ENCODE measurements at regions of chr10 and their contacts with region 1.

Region 1: DNA sequence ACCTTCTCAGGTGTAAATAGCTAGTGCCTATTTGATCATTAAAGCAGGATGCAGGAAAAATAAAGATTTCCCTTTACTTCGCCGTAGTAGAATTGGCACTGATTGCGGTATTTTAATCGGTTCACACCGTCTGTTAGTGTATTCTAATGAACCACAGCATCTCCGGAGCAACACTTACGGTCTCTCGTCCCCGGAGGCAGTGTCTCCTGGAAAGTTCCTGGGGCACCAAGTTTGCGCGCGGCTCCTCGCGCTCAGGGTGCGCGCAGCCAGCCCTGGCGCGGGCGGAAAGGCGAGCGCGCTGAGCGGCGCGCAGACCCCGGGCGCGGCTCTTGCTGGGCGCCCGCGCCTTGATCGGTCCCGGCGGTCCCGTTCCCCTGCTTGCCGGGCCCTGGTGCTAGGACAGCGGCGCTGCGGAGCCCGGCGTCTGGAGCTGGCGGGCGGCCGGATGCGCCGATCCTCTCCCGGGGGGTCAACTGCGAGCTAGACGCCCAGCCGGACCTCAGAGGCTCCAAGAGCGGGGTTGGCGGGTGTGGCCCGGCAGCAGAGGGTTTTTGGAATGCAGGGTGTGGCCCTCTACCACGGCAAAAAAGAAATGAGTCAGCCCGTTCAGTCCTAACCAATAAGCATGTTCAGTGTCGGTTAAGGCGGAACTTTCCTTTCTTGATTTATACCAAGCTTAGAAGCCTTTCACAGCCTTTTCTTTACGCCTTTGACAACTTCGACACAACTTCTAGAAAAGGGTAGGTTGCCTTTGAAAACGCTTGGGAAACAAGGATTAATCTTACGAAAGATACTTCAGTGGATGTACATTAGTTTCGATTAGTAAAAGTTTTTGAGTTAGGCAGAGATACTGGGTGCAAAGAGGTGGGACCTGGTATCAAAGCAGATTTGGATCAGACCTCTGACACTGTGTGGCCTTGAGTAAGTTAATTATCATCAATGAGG is 166.8 kb upstream of the ASAH2 start:
- DNase-seq: peak; percentile 81 to 86
- ATAC-seq: peak; percentile 83 to 92 (median 88)
- H3K4me3 ChIP-seq: peak overlapping the region; percentile 83
- H3K27ac ChIP-seq: peak overlapping the region; percentile 79
- H3K4me1 ChIP-seq: peaks cover 29% of the 10 kb centered on the region
- H3K27me3 ChIP-seq: no peaks in the 10 kb centered on the region
- CTCF ChIP-seq: peak; percentile 14

Region 2: GRCh38 chr10:50310560-50311174 is 107.5 kb before region 1 on chr10:
- intact Hi-C with region 1: loop called in 1 of 2 experiments (anchors 2 kb)
- DNase-seq: no peak
- ATAC-seq: peak in 1 of 4 donors; percentile 59
- H3K4me3 ChIP-seq: no peak overlapping the region
- H3K27ac ChIP-seq: no peak overlapping the region
- H3K4me1 ChIP-seq: no peaks in the 10 kb centered on the region
- H3K27me3 ChIP-seq: no peaks in the 10 kb centered on the region
- CTCF ChIP-seq: no peak

Region 3: GRCh38 chr10:50336140-50336539 is 82.0 kb before region 1 on chr10:
- intact Hi-C with region 1: loop called in 1 of 2 experiments (anchors 5 kb)
- DNase-seq: no peak
- ATAC-seq: no peak
- H3K4me3 ChIP-seq: no peak overlapping the region
- H3K27ac ChIP-seq: no peak overlapping the region
- H3K4me1 ChIP-seq: no peaks in the 10 kb centered on the region
- H3K27me3 ChIP-seq: no peaks in the 10 kb centered on the region
- CTCF ChIP-seq: no peak

Region 4: DNA sequence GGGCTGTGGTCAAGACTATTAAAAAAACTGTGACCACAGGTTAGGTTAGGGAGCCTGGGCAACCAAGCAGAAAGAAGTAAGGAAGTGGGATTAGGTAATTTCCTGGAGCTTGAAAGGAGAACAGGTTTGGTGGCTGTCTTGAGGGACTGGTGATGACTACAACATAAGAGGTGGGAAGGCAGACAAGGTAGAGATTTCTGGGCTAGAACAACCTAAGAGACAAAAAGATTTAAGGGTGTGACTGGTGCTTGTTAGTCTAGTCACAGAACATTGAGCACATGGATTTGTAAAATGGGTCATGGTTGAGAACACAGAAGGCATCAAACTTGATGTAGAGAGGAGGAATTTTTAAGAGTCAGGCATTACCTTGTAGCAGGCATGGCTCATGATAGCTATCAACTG is 43.1 kb before region 1 on chr10:
- intact Hi-C with region 1: loop called in 1 of 2 experiments (anchors 2 kb)
- DNase-seq: no peak
- ATAC-seq: no peak
- H3K4me3 ChIP-seq: no peak overlapping the region
- H3K27ac ChIP-seq: peak overlapping the region; percentile 75
- H3K4me1 ChIP-seq: peaks cover 39% of the 10 kb centered on the region
- H3K27me3 ChIP-seq: no peaks in the 10 kb centered on the region
- CTCF ChIP-seq: no peak

Region 5: DNA sequence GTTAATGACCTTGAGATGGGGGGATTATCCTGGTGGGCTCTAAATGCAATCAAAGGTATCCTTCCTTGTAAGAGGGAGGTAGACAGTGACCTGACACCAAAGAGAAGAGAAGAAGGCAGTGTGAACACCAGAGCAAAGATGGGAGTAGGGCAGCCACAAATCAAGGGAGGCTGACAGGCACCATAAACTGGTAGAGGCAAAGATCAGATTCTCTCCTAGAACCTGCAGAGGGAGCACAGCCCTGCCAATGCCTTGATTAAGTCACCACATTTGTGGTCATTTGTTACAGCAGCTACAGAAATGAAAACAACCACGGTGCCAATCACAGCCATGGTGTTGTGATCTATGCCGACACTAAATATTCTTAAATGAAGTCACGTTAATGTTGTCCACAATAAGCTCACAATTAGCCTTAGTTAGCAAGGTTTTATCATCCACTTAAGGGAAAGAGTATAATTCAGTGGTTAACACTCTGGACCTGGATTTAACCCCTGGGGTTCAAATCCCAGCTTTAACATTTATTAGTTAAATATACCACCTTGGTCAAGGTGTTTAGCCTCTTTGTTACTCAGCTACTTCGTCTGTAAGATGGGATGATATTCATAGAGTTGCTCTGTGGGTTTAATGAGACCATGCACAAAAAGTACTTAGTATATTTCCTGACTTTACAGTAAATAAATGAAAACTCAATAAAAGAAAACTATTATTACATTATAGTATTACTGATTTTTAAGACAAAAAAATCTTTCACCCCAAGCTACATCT is 134.8 kb after region 1 on chr10:
- intact Hi-C with region 1: loop called in 1 of 2 experiments (anchors 5 kb)
- DNase-seq: no peak
- ATAC-seq: peak in 3 of 4 donors; percentile 43 to 57 (median 44)
- H3K4me3 ChIP-seq: no peak overlapping the region
- H3K27ac ChIP-seq: no peak overlapping the region
- H3K4me1 ChIP-seq: peaks cover 57% of the 10 kb centered on the region
- H3K27me3 ChIP-seq: no peaks in the 10 kb centered on the region
- CTCF ChIP-seq: peak; percentile 8

Measured in psoas muscle (tissue), 8 donors.